ENCODE measurements at regions of chr1 and their contacts with region 1.

Region 1: DNA sequence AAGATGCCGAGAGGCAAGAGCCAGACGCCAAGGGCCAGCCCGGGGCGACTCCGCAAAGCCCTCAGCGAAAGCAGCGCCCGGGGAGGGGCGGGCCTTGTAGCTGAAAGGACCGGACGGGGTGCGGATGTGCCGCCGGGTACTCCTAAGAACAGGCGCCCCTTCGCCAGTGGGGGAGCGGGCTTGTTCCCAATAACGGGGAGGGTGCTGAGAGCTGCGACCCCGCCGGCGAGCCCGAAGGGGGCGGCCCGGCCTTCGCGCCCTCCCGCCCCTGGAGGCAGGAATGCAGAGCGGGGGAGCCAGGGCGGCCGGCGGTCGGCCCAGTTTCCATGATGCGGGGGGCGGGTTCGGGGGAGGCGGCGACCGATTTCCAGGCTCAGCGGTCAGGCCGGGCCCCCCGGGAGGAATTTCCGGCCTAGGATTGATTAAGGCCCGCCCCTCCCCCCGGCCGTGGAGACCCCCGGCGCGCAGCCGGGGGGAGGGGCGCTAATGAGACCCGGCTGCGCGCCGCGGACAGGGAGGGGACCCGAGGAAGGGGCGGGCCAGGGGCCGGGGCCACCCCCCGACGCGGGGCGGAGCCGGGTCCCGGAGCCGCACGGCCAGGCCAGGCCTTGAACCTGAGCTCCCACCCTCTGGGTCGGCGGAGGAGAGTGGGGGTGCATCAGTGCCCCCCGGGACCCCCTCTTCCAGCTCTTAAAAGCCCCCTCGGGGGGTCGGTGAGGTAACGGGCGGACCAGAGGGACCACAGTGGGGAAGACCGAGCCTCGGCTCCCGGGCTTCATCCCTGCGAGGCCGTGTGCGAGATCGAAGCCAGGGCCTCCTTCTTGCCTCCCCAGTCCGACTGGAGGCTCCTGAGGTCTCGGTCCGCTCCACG is 898 bp upstream of the TMEM200B start:
- DNase-seq: peak; percentile 64
- H3K4me3 Mint-ChIP-seq: peak overlapping the region; percentile 70
- H3K27ac Mint-ChIP-seq: no peak overlapping the region
- H3K4me1 Mint-ChIP-seq: peaks cover 12% of the 10 kb centered on the region
- H3K27me3 Mint-ChIP-seq: peaks cover 21% of the 10 kb centered on the region

Region 2: DNA sequence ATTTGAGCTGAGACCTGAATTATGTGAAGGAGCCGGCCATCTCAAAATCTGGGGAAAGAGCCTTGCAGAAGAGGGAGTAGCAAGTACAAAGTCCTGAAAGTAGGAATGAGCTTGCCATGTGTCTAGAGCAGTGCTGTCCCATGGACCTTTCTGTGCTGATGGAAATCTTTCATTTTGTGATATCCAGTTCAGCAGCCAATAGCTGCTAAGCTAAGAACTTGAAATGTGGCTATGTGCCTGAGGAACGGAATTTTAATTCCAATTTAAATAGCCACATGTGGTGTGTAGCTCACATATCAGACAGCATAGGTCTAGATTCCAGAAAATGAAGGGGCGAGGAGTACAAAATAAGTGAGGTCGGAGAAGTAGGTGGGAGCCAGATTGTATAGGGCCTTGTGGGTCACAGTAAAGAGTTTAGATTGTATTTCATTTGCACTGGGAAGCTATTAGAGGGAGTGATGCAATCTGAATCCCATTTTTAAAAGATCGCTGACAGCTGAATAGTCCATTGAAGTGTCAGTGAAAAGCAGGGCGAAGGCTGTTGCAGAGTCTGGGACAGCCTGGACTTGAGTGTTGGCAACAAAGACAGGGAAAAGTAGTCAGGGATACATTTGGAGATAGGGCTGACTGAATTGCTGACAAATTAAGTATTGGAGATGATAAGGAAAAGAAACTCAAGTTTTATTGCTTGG is 81.2 kb before region 1 on chr1:
- CTCF ChIA-PET with region 1: interaction called, 4 read pairs
- intact Hi-C with region 1: loop called (anchors 5 kb)
- DNase-seq: no peak
- H3K4me3 Mint-ChIP-seq: no peak overlapping the region
- H3K27ac Mint-ChIP-seq: peak overlapping the region; percentile 85
- H3K4me1 Mint-ChIP-seq: peaks cover 38% of the 10 kb centered on the region
- H3K27me3 Mint-ChIP-seq: no peaks in the 10 kb centered on the region

Measured in activated naive CD4-positive, alpha-beta T cell treated with anti-CD3 and anti-CD28 coated beads for 36 hours (primary cell).